Activated CD4-positive, alpha-beta memory T cell treated with anti-CD3 and anti-CD28 coated beads, Interleukin-2, amount 10 ng/mL, durations not matched to agents 7 days and 5 days (primary cell): ENCODE measurements at regions of chr16 and their contacts with region 1.

Region 1: GRCh38 chr16:89720813-89721545 is at the starts of genes VPS9D1 and ZNF276:
- DNase-seq: peak; percentile 84
- H3K4me3 Mint-ChIP-seq: peak within 1 kb of the TSS; percentile 96
- H3K27ac Mint-ChIP-seq: peak within 1 kb of the TSS; percentile 100
- H3K4me1 Mint-ChIP-seq: peaks cover 40% of the 10 kb centered on the region
- H3K27me3 Mint-ChIP-seq: no peaks in the 10 kb centered on the region
- total RNA-seq, gene VPS9D1: 7.0 to 7.8 TPM
- total RNA-seq, gene ZNF276: 50.4 to 56.5 TPM

Region 2: DNA sequence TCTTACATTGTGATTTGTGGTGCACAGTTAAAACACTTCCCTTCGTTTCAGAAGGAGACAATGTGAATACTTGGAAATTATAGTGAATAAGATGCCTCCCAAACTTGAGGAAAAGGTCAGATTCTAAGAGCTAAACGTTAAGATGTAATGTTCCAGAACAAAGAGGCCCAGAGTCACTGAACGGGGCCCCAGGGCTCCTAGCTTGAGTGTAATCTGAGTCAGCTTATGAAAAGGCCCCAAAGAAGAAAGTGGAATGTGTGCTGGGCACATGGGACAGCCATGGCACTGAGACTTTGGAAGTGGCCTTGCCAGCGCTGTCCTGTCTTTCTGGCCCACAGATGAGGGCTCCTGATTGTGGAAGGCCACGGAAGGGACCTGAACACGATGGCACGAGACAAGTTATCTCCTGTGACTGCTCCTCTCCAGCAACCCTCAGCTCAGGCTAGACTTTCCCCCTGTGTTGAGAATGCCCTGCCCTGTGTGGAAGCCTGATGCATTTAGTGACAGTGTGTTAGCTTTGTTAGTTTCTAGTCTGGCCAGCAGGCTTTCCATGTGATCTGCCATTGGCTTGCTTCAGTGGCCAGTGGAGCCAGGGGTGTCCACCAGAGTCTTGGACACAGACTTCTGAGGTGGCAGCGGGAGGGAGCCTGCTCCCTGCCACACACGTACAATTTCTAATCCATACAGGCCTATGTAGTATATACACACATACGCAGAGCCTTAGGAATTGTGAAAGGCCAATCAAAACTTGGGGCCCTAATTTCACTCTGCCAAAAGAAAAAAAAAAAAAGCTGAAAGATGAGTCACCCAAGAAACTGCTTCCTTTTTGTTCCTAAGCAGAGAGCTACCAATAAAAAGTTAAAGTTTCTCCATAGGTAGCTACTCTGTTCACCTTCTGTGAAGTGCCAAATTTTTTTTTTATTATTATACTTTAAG is 50.2 kb before region 1 on chr16:
- CTCF ChIA-PET with region 1: no interaction called
- POLR2A ChIA-PET with region 1: no interaction called
- DNase-seq: no peak
- H3K4me3 Mint-ChIP-seq: no peak overlapping the region
- H3K27ac Mint-ChIP-seq: no peak overlapping the region
- H3K4me1 Mint-ChIP-seq: peaks cover 12% of the 10 kb centered on the region
- H3K27me3 Mint-ChIP-seq: no peaks in the 10 kb centered on the region

Region 3: DNA sequence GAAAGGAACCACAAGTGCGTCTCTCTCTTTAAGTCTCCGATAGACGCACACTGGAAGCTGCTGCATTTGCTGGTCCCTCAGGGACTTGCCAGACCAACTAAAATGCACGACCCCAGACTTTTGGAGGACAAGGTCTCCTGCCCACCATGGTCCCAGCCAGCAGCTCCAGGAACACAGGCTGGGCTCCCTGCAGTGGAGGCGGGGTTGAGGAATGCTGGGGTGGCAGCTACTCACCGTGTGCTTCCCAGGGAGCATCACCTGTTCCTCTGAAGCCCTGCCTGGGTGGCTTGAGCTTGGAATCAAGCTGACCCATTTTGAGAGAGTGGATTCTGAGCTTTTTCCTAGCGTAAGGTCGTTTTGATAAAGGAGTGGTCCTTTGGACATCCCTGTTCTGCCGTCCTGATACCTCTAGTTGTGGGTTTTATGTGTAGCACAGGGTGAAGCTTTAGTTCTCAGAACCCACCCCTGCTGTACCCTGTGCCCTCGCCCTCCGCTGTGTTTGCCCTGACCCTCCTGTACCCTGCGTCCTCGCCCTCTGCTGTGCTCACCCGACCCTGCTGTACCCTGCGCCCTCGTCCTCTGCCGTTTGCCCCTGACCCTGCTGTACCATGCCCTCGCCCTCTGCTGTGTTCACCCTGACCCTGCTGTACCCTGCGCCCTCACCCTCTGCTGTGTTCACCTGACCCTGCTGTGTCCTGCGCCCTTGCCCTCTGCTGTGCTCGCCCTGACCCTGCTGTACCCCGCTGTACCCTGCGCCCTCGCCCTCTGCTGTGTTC is 11.4 kb after region 1 on chr16:
- CTCF ChIA-PET with region 1: interaction called, 8 read pairs
- POLR2A ChIA-PET with region 1: interaction called, 89 read pairs
- DNase-seq: no peak
- H3K4me3 Mint-ChIP-seq: no peak overlapping the region
- H3K27ac Mint-ChIP-seq: no peak overlapping the region
- H3K4me1 Mint-ChIP-seq: peaks cover 39% of the 10 kb centered on the region
- H3K27me3 Mint-ChIP-seq: no peaks in the 10 kb centered on the region

Region 4: DNA sequence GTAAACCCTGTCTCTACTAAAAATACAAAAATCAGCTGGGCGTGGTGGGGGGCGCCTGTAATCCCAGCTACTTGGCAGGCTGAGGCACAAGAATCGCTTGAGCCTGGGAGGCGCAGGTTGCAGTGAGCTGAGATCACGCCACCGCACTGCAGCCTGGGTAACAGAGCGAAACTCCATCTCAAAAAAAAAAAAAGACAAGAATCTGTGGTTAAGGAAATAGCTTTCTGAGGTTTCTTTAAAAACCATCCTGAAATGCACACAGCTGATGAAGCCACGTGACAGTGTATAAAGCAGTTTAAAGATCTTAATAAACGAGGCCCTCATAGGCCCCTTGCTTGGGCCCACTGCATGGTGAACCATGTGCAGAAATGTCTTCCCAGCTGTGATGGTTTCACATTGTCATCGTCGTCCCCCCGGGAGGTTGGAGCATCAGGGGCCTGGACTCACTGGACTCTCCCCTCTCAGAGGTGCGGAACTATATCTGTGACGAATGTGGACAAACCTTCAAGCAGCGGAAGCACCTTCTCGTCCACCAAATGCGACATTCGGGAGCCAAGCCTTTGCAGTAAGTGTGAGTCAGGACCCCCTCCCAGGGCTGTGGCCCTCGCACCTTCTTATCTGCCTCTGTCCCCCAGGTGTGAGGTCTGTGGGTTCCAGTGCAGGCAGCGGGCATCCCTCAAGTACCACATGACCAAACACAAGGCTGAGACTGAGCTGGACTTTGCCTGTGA is 16.5 kb after region 1 on chr16:
- CTCF ChIA-PET with region 1: interaction called, 8 read pairs
- POLR2A ChIA-PET with region 1: interaction called, 89 read pairs
- DNase-seq: peak; percentile 70
- H3K4me3 Mint-ChIP-seq: peak overlapping the region; percentile 32
- H3K27ac Mint-ChIP-seq: peak overlapping the region; percentile 78
- H3K4me1 Mint-ChIP-seq: peaks cover 30% of the 10 kb centered on the region
- H3K27me3 Mint-ChIP-seq: no peaks in the 10 kb centered on the region

Region 5: DNA sequence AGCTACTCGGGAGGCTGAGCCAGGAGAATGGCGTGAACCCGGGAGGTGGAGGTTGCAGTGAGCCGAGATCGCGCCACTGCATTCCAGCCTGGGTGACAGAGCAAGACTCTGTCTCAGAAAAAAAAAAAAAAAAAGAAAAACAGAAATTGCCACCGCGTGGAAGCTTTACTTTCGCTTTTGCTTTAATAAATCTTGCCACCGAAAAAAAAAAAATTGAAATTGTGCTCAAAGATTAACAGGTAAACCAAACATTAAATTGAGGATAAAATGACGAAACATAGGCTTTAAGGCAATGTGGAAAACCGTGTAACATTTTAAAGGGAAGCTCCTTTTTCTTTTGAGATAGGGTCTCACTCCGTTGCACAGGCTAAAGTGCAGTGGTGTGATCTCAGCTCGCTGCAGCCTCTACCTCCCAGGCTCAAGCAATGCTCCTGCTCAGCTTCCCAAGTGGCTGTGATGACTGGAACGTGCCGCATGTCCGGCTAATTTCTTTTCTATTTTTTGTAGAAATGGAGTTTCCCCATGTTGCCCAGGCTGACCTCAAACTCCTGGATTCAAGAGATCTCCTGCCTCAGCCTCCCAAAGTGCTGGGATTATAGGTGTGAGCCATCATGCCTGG is 40.4 kb after region 1 on chr16:
- CTCF ChIA-PET with region 1: interaction called, 4 read pairs
- POLR2A ChIA-PET with region 1: interaction called, 15 read pairs
- DNase-seq: no peak
- H3K4me3 Mint-ChIP-seq: peak overlapping the region; percentile 76
- H3K27ac Mint-ChIP-seq: peak overlapping the region; percentile 87
- H3K4me1 Mint-ChIP-seq: peaks cover 54% of the 10 kb centered on the region
- H3K27me3 Mint-ChIP-seq: no peaks in the 10 kb centered on the region

Region 6: GRCh38 chr16:89779231-89779908 is 58.4 kb after region 1 on chr16:
- CTCF ChIA-PET with region 1: no interaction called
- POLR2A ChIA-PET with region 1: no interaction called
- DNase-seq: no peak
- H3K4me3 Mint-ChIP-seq: no peak overlapping the region
- H3K27ac Mint-ChIP-seq: no peak overlapping the region
- H3K4me1 Mint-ChIP-seq: peaks cover 2% of the 10 kb centered on the region
- H3K27me3 Mint-ChIP-seq: no peaks in the 10 kb centered on the region